BJ (cell line): ENCODE measurements at regions of chr3 and their contacts with region 1.

Region 1: DNA sequence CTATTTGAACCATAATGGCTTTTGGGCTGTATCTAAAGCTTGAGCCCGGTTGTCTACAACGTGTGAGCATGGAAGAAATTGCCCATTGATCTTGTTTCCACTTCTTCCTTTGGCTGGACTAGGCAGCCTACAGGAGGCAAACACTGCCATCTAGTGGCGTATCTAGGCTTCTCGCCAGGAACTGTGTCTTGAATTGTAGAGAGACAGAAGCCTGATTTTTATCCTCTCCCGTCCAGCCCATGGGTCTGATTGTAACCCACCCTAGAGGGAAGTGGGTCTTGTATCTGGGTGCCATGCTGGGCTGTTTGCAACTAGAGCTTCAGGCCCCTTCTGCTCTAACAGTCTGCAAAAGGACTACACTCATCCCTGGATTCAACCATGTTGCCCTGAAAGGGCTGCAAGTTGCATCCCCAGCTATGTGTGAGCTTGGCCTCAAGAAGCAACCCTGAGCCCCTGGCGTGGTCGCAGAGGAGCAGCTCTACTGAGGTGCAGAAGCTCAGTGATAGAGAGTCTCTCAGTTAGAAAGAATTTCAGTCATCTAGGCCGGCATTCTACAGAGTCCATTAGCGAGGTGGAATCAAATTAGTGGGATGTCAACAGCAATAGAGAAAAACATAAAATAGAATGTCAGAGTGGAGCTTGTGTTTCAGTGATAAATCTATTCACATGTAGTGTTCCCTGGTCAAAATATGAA is 170.2 kb upstream of the UMPS start:
- DNase-seq: no peak
- H3K4me3 ChIP-seq: no peak overlapping the region
- H3K27me3 ChIP-seq: 0 out of 2 replicates have a peak, but pooled peaks cover 1% of the 10 kb centered on the region
- CTCF ChIP-seq: peak; percentile 89

Region 2: GRCh38 chr3:124014366-124014942 is 545.6 kb before region 1 on chr3:
- CTCF ChIA-PET with region 1: interaction called, 10 read pairs
- POLR2A ChIA-PET with region 1: no interaction called
- DNase-seq: no peak
- H3K4me3 ChIP-seq: no peak overlapping the region
- H3K27me3 ChIP-seq: no peaks in the 10 kb centered on the region; the same call in 1 of the 2 replicates
- CTCF ChIP-seq: no peak

Region 3: GRCh38 chr3:124486324-124486723 is 73.7 kb before region 1 on chr3:
- CTCF ChIA-PET with region 1: interaction called, 12 read pairs
- POLR2A ChIA-PET with region 1: interaction called, 4 read pairs
- DNase-seq: no peak
- H3K4me3 ChIP-seq: no peak overlapping the region
- H3K27me3 ChIP-seq: peaks cover 2% of the 10 kb centered on the region; the same call in 1 of the 2 replicates
- CTCF ChIP-seq: no peak

Region 4: GRCh38 chr3:124676236-124676635 is 116.2 kb after region 1 on chr3:
- CTCF ChIA-PET with region 1: interaction called, 16 read pairs
- POLR2A ChIA-PET with region 1: no interaction called
- DNase-seq: no peak
- H3K4me3 ChIP-seq: no peak overlapping the region
- H3K27me3 ChIP-seq: no peaks in the 10 kb centered on the region; the same call in 1 of the 2 replicates
- CTCF ChIP-seq: no peak

Region 5: DNA sequence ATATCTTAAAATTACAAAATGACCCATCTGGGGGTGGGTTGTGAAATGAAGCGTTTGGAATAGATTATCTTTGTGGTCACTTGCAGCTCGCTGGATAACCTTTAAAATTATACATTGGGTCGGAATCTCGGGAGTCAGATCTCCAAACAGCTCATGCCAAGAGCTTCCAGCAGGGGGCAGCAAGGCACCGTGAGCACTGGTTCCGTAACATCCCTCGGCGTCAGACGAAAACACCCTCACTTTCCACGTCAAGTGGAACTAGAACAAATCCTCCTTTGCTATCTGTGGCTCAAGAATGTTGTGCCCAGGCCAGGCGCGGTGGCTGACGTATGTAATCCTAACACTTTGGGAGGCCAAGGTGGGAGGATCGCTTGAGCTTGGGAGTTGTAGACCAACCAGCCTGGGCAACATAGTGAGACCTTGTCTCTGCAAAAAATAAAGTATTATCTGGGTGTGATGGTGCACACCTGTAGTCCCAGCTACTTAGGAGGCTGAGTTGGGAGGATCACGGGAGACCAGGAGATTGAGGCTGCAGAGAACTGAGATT is 201.3 kb after region 1 on chr3:
- CTCF ChIA-PET with region 1: interaction called, 11 read pairs
- POLR2A ChIA-PET with region 1: no interaction called
- DNase-seq: peak; percentile 49
- H3K4me3 ChIP-seq: no peak overlapping the region
- H3K27me3 ChIP-seq: no peaks in the 10 kb centered on the region
- CTCF ChIP-seq: peak; percentile 96